Prostate gland (tissue), 2 donors: ENCODE measurements at regions of chr7 and their contacts with region 1.

Region 1: DNA sequence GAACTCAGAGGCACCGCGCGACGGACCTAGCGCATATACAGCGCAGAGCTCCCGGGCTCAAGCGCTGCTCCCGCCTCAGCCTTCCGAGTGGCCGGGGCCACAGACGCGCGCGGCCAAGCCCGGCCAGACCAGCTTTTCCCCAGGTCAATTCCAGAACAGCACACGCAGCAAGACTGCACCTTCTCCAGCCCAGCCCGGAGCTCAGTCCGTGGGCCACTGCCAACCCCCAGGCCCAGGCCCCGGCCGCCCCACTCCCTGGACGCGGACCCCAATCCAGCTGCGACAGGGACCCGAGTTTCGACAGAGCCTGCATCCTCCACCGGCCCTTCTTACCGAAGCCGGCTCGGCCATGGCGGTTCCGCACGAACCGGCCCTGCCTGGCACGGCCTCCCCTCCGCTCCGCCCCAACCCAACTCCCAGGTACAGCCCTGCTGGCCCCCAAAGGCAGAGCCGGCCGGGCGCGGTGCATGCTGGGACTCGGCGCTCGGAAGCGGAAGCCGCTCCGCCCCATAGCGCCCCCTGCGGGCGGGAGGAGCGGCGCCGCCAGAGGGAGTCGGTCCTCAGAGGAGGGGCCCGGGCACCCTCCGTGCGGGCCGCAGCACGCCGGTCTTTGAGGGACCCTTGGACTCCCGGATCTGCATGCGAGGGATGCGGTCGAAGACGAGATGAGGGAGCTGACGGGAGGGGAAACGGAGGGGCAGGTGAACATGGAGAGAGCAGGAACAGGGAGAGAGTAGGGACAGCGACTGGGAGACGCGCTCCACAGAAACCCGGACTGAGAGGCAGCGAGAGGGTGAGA is at the start of gene ZNF425:
- DNase-seq: peak; percentile 88
- H3K4me3 ChIP-seq: peak within 1 kb of the TSS; percentile 58 to 84
- H3K27ac ChIP-seq: peak within 1 kb of the TSS; percentile 98
- H3K4me1 ChIP-seq: no peaks in the 10 kb centered on the region
- H3K27me3 ChIP-seq: no peaks in the 10 kb centered on the region
- CTCF ChIP-seq: peak; percentile 99 to 100 (median 99)
- POLR2A ChIP-seq: peak; percentile 96
- total RNA-seq, gene ZNF425: 2.8 to 4.0 TPM

Region 2: GRCh38 chr7:149147072-149147751 is 21.1 kb after region 1 on chr7 and contains the start of gene ZNF398:
- intact Hi-C with region 1: loop called (anchors 2 kb)
- DNase-seq: peak; percentile 59
- H3K4me3 ChIP-seq: peak within 1 kb of the TSS; percentile 93 to 98
- H3K27ac ChIP-seq: peak within 1 kb of the TSS; percentile 85 to 93
- H3K4me1 ChIP-seq: no peaks in the 10 kb centered on the region
- H3K27me3 ChIP-seq: no peaks in the 10 kb centered on the region
- CTCF ChIP-seq: peak; percentile 67 to 96 (median 76)
- POLR2A ChIP-seq: peak; percentile 34
- total RNA-seq, gene ZNF398: 27.6 to 28.9 TPM